ENCODE measurements at regions of chr15 and their contacts with region 1.

Region 1: DNA sequence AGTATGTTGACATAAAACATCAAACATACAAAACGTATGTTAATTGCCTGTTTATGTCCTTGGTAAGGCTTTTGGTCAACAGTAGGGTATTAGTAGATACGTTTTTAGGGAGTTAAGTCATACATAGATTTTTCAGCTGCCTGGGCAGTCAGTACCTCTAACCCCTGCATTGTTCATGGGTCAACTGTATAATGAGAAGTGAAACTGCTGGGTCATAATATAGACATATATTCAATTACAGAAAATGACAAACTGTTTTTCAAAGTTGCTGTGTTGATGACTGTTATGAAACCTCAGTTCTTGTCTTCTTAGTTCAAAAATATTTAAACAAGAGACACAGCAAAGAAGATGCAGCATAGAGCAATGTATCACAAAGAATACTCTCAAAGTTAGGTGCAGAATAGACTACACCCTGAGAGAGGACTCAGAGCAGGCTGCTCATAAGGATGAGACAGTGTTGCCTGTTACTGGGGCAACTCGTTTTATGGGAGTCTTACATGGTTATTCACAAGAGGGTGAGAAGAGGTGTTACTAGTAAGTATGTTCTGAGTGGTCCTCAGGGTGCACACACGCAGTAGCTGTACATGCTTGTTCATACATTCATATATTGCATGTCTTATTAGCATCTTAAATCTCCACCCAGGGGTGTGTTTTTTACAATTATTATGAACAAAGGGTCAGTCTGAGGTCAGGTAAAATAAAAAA is 53.1 kb upstream of the ADAMTS17 start:
- DNase-seq: no peak
- ATAC-seq: no peak
- H3K4me3 ChIP-seq: no peak overlapping the region
- H3K27ac ChIP-seq: no peak overlapping the region
- H3K4me1 ChIP-seq: no peaks in the 10 kb centered on the region
- H3K27me3 ChIP-seq: no peaks in the 10 kb centered on the region

Region 2: GRCh38 chr15:100433300-100433699 is 38.4 kb after region 1 on chr15:
- intact Hi-C with region 1: no loop called
- DNase-seq: no peak
- ATAC-seq: no peak
- H3K4me3 ChIP-seq: no peak overlapping the region
- H3K27ac ChIP-seq: no peak overlapping the region
- H3K4me1 ChIP-seq: no peaks in the 10 kb centered on the region
- H3K27me3 ChIP-seq: no peaks in the 10 kb centered on the region

Region 3: GRCh38 chr15:100457201-100457600 is 62.3 kb after region 1 on chr15:
- intact Hi-C with region 1: loop called in 1 of 2 experiments (anchors 10 kb)
- DNase-seq: no peak
- ATAC-seq: no peak
- H3K4me3 ChIP-seq: no peak overlapping the region
- H3K27ac ChIP-seq: no peak overlapping the region
- H3K4me1 ChIP-seq: no peaks in the 10 kb centered on the region
- H3K27me3 ChIP-seq: no peaks in the 10 kb centered on the region

Region 4: GRCh38 chr15:100468285-100468684 is 73.4 kb after region 1 on chr15:
- intact Hi-C with region 1: no loop called
- DNase-seq: peak; percentile 65 to 78
- ATAC-seq: no peak
- H3K4me3 ChIP-seq: no peak overlapping the region
- H3K27ac ChIP-seq: no peak overlapping the region
- H3K4me1 ChIP-seq: peaks cover 4% of the 10 kb centered on the region in 2 donors
- H3K27me3 ChIP-seq: no peaks in the 10 kb centered on the region

Region 5: DNA sequence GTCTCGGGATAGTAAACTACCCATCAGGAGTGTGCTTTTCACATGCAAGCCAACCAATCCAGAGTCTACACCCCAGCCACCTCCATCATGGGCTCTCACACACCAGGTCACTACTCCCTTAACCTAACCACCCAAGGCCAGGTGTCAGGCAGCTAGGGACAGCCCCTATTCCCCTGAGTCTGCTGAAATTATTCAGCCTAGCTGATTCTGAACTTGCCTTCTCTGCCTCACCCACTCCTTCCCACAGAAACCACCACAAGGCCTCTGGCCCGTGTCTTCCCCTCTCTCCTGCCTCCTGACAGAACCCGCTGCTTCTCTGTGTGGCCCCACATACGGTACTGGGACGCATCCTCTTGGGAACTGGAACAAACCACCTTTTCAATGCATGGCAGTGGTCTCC is 1012.6 kb after region 1 on chr15:
- intact Hi-C with region 1: no loop called
- DNase-seq: no peak
- ATAC-seq: no peak
- H3K4me3 ChIP-seq: no peak overlapping the region
- H3K27ac ChIP-seq: no peak overlapping the region
- H3K4me1 ChIP-seq: no peaks in the 10 kb centered on the region
- H3K27me3 ChIP-seq: no peaks in the 10 kb centered on the region